ENCODE measurements at regions of chr1 and their contacts with region 1.

Region 1: DNA sequence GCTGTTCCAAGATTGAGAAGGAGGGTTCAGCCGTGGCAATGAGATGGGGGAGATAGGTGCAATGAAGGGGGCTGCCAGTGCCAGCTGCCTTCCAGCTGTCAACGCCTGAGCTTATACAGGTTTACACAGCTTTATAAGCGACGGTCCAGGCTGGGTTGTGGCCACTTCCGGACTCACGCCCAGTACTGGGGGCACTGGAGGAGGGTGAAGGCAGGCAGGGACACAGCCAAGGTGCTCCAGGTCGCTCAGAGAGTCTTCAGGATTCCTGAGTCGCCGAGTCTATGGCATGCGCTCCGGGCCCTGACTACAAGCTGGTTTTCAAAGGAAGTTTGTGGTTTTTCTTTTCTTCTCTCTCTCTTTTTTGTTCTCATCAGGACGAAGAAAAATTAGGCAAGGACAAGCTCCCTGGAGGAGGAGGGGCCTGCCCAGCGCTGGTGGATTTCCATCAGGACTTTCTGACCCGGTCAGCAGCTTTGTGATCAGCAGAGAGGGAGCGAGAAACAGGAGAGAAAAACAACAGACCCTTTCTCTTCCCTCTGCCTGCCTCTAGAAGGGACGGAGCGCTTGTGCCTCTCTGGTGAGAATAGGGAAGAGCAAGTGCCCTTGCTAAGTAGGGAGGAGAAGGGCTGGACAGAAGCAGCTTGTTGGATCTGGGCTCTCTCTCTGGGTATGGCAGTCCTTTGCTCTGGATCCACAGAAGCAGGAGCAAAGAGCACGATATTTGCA is at the start of gene MINDY1:
- DNase-seq: peak; percentile 87

Region 2: DNA sequence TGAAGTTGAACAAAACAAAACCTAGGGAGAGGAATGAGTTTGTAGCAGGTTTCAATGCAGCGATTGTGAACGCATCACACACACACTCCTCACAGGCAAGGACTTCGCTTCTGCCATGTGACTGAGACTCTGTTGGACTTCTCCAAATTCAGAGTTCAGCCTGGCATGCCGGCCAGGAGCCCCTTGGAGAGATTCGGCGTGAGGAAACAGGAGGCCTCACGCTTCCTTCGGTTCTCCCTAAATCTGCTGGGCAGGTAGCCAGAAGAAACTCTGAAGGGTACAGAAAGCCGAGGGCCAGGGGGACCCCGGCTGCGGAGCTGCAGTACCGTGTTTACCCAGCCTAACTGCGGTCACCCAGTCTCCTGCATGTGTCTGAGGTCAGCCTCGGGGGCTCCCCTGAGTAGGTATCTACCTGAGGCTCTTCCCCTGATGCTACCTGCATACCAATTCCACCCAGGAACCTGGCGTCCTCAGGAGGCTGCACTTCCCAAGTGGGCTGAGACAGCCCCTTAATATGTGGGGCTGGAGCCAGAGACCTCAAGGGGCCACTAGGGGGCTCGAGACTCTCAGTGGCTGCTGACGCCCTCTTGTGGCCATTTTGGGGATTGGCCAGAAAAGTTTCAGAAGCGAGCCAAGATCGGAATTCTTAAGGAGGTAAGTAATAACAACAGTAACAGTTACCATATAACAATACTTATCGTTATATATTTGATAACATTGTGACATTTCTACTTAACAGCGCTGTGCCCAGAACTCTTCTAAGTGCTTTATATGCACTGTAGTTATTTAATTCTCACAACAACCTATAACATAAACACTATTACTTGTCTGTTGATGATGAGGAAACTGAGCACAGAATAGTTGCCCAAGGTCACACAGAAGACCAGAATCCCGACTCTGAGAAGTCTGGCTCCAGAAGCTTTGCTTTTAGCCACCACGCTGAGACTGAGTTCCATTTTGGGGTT is 27.1 kb before region 1 on chr1:
- CTCF ChIA-PET with region 1: interaction called, 51 read pairs
- POLR2A ChIA-PET with region 1: interaction called, 20 read pairs
- DNase-seq: peak; percentile 91

Region 3: GRCh38 chr1:150995896-150996295 is 10.6 kb before region 1 on chr1:
- CTCF ChIA-PET with region 1: interaction called, 63 read pairs
- POLR2A ChIA-PET with region 1: interaction called, 14 read pairs
- DNase-seq: no peak

Region 4: DNA sequence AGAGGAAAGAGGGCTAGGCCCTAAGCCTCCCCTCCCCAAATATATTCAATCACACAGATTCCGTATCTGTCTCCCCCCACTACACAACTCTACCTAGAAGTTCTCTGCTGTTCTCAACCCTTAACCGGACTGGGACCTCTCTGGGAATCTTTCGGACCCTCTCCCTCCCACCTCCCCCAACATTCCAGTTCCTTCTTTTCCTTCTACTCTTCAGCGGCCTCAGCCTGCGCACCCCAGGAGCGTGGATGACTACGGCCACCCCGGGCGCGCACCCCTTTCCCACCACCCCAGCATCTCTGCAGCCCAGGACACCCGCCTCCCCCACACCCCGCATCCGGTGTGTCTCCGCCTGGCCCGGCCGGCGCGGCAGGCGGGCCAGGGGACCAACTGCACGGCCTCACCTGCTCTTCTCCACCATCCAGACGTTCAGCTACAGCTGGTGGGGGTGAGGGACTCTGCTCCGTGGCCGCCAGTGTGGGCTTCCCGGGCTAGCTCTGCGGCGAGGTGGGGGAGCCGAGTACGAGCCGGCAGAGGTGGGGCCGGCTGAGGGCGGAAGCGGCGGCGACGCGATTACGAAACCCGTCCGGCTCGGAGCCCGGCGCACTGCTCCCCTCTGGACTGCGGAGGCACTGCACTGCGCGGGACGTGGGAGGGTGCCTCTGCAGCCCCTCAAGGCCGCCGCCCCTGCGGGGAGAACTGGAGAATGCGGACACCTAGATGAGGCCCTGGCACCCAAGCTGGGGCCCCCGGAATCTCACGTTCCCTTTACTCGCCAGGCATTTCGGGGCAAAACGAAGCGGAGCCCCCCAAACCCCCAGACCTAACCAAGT is 52.8 kb after region 1 on chr1 and contains the start of gene CDC42SE1:
- CTCF ChIA-PET with region 1: no interaction called
- POLR2A ChIA-PET with region 1: interaction called, 10 read pairs
- DNase-seq: peak; percentile 93

Measured in HEK293T (cell line).